Right ventricle myocardium inferior (tissue), 1 donor: ENCODE measurements at regions of chr13 and their contacts with region 1.

Region 1: DNA sequence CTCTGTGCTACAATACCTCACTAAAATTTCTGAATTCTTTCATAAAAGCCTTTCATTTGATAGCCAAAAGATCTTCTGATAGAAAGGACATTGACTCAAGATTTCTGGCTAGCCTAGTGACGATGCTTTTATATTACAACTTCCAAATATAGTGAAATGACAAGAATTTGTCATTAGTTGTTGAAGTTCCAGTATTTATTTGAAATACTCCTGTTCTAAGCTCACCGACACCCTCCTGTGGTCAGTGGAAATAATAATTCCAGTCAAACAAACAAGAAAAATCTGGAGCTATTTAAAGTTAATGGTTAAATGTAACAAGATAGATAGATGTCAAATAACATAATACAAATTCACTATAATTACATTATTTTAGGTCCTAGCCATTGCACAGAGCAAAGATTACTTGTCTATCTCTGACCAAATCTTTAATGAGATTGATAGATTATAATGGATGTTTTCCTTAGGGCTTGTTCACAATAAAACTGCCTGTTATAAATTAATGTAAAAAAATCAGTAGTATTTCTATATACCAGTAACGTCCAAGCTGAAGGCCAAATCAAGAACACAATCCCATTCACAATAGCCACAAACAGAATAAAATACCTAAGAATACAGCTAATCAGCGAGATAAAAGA is 195.5 kb downstream of the RGCC start:
- DNase-seq: no peak
- ATAC-seq: no peak

Region 2: DNA sequence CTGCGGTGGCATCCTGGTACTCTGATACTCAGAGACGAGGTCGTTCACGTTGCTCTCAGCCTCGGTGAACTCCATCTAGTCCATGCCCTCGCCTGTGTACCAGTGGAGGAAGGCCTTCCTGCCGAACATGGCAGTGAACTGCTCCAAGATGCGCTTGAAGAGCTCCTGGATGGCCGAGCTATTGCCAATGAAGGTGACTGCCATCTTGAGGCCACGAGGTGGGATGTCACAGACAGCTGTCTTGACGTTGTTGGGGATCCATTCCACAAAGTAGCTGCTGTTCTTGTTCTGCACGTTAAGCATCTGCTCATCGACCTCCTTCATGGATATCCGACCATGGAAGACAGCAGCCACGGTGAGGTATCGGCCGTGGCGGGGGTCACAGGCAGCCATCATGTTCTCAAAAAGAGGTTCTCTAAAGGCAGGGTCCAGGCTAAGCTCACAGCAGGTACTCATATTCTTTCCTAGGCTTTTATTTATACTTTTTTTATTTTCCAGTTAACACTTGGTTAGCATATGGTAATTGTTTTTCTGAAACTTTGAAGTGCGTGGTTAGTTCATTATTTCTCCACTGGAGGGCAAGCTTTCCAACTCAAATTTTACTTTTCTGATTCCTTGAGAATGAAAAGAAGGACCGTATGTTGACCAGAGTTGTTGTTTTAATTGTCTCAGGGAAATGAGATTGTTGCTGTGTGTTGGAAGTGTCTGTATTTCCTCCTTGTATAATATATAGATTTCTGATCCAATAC is 267.9 kb before region 1 on chr13:
- intact Hi-C with region 1: loop called (anchors 10 kb)
- DNase-seq: no peak
- ATAC-seq: no peak

Region 3: DNA sequence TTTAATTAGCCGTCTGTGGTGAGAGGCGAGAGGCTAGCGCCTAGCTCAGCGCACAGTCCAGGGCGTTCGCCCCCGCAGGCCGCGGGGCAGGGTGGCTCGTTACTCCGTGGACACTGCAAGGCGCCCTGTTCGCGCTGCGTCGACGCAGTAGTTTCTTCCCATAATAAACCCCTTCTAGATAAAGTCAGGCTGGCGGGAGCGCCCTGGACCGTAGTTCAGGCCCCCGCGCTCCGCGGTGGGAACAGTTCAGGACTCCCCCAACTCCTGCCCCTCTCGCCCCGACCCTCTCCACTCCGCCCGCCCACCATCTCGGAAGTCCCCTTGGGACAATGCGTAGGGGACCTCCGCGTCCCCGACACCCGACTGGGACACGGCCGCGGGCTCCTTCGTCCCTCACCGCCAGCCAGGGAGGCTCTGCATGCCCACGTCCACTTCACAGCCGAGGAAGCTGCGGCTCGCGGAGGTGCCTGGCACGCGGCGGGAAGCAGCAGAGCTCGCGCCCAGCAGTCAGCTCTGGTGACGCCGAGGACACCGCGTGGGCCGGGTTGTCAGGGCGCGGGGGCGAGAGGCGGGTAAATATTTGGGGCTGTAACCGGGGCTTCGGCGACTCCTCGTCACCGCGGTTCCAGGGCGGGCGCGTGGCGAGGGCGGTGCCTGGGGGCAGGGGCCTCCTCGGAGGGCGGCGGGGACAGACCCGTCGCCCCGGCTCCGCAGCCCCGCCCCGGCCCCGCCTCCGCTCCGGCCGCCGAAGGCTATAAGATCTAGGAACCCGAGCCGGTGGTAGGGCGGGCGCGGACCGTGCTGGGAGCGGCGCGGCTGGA is 195.9 kb before region 1 on chr13 and contains the start of gene RGCC:
- intact Hi-C with region 1: loop called (anchors 5 kb)
- DNase-seq: peak; percentile 94
- ATAC-seq: peak; percentile 90
- total RNA-seq, gene RGCC: 41.4 TPM

Region 4: DNA sequence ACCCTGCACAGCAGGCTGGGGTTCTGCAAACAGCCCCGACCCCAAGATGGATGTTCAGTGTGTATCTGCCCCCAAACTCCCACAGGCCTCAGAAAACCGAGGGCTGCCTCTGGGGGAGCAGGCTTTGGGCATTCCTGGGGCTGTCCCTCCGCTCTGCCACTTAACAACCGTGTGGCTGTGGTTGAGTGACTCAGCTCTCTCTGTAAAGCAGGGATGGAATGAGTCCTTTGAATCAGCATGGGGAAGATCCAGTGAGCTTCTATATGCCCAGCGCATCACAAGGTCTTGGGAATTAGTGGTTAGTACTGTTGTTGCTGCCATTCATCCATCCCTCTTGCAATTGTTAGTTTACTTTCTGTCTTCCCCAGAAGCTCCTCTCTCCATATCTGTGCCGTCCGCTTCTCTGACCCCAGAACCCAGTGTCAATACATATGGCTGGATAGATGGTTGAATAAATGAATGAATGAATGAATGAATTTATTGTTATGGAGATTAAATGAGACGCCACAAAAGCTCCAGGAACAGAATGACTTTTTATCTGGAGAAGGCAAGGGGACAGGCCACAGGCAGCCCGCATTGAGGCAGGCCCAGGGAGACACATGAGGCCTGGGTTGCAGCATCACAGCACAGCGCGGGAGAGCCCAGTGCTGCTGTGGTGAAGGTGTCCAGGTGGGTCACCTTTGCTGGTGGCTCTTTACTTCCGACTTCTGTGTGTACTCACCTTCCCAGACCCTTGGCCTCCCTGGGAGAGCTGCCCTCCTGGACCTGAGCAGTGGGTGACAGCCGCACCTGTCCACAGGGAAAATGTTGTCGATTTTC is 106.3 kb before region 1 on chr13:
- intact Hi-C with region 1: loop called (anchors 10 kb)
- DNase-seq: no peak
- ATAC-seq: no peak